Naive thymus-derived CD4-positive, alpha-beta T cell (primary cell): ENCODE measurements at regions of chr6 and their contacts with region 1.

Region 1: DNA sequence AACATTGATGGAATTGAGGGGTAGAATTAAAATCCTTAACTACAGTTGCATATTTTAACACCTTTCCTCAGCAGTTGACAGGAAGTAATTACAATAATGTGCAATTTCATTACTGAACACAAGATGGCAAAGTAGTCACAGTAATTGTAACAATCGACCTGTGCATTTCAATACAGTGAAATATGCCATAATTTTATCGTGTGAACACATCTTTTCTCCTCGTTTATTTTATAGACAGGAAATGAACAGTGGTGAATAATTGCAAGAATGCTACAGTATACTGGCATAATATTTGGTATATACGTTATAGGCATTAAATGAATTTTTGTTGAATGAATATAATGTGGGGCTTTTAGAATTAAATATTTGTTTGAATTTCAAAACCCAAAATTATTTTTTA is 25.0 kb downstream of the CYB5R4 start:
- DNase-seq: peak in 6 of 9 donors; percentile 17 to 54 (median 44)
- ATAC-seq: peak; percentile 77
- H3K4me3 ChIP-seq: no peak overlapping the region
- H3K4me3 Mint-ChIP-seq: no peak overlapping the region
- H3K27ac ChIP-seq: no peak overlapping the region
- H3K27ac Mint-ChIP-seq: no peak overlapping the region
- H3K4me1 ChIP-seq: no peaks in the 10 kb centered on the region
- H3K4me1 Mint-ChIP-seq: peaks cover 7 to 55% (median 28%) of the 10 kb centered on the region in 7 donors
- H3K27me3 ChIP-seq: no peaks in the 10 kb centered on the region
- H3K27me3 Mint-ChIP-seq: no peaks in the 10 kb centered on the region

Region 2: DNA sequence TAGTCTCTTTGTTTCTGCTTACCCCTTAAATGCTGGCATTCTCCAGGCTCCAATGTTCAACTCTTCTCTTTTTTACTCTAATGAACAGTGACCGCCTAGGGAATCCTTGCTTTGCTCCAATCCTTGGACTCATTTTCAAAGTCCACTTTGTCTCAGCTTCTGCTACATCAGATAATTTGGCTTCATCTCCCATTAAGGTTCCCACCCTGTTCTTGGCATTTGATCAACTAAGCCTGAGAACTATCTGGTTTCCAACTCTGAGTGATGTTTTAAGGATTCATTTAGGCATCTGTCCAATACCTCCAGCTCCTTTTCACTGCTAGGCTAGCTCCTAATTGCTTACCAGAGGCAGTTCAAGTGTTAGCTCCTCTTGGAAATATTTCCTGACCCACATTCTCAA is 518.6 kb before region 1 on chr6:
- CTCF ChIA-PET with region 1: no interaction called
- POLR2A ChIA-PET with region 1: no interaction called
- intact Hi-C with region 1: no loop called
- DNase-seq: no peak
- ATAC-seq: no peak
- H3K4me3 ChIP-seq: no peak overlapping the region
- H3K4me3 Mint-ChIP-seq: no peak overlapping the region
- H3K27ac ChIP-seq: no peak overlapping the region
- H3K27ac Mint-ChIP-seq: no peak overlapping the region
- H3K4me1 ChIP-seq: no peaks in the 10 kb centered on the region
- H3K4me1 Mint-ChIP-seq: no peaks in the 10 kb centered on the region
- H3K27me3 ChIP-seq: no peaks in the 10 kb centered on the region
- H3K27me3 Mint-ChIP-seq: peaks cover 0 to 6% (median 0%) of the 10 kb centered on the region in 5 donors

Region 3: DNA sequence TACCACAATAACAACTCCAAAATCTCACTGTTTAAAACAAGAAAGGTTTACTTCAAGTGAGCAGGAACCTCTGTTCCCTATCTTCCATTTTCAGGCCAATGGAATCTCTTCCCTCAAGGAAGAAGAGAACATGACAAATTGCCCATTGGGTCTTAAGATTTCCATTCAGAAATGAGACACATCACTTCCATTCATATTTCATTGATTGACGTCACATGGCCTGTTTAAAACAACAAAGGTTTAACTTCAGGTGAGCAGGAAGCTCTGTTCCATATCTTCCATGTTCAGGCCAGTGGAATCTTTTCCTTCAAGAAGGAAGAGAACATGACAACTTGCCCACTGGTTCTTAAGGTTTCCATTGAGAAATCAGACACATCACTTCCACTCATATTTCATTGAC is 42.2 kb before region 1 on chr6:
- CTCF ChIA-PET with region 1: no interaction called
- POLR2A ChIA-PET with region 1: no interaction called
- intact Hi-C with region 1: no loop called
- DNase-seq: no peak
- ATAC-seq: no peak
- H3K4me3 ChIP-seq: no peak overlapping the region
- H3K4me3 Mint-ChIP-seq: no peak overlapping the region
- H3K27ac ChIP-seq: no peak overlapping the region
- H3K27ac Mint-ChIP-seq: no peak overlapping the region
- H3K4me1 ChIP-seq: no peaks in the 10 kb centered on the region
- H3K4me1 Mint-ChIP-seq: no peaks in the 10 kb centered on the region
- H3K27me3 ChIP-seq: peaks cover 0 to 2% of the 10 kb centered on the region in 2 donors
- H3K27me3 Mint-ChIP-seq: peaks cover 5 to 34% (median 17%) of the 10 kb centered on the region in 5 donors

Region 4: GRCh38 chr6:83859410-83860358 is 24.8 kb before region 1 on chr6 and contains the start of gene CYB5R4:
- CTCF ChIA-PET with region 1: interaction called, 5 read pairs
- POLR2A ChIA-PET with region 1: no interaction called
- intact Hi-C with region 1: loop called in 1 of 2 experiments (anchors 2 kb)
- DNase-seq: peak; percentile 88 to 95 (median 94)
- ATAC-seq: peak; percentile 98
- H3K4me3 ChIP-seq: peak within 1 kb of the TSS; percentile 92
- H3K4me3 Mint-ChIP-seq: peak within 1 kb of the TSS; percentile 87 to 100 (median 98)
- H3K27ac ChIP-seq: peak within 1 kb of the TSS; percentile 82
- H3K27ac Mint-ChIP-seq: peak within 1 kb of the TSS; percentile 85 to 96 (median 91)
- H3K4me1 ChIP-seq: peaks cover 14 to 21% of the 10 kb centered on the region in 2 donors
- H3K4me1 Mint-ChIP-seq: peaks cover 23 to 47% (median 37%) of the 10 kb centered on the region in 7 donors
- H3K27me3 ChIP-seq: no peaks in the 10 kb centered on the region
- H3K27me3 Mint-ChIP-seq: peaks cover 8 to 18% (median 16%) of the 10 kb centered on the region in 5 donors
- total RNA-seq, gene CYB5R4: 17.8 to 38.6 (median 21.0) TPM

Region 5: GRCh38 chr6:84220809-84221409 is 336.4 kb after region 1 on chr6:
- CTCF ChIA-PET with region 1: interaction called, 10 read pairs
- POLR2A ChIA-PET with region 1: no interaction called
- intact Hi-C with region 1: loop called (anchors 1 kb)
- DNase-seq: peak in 1 of 9 donors; percentile 11
- ATAC-seq: no peak
- H3K4me3 ChIP-seq: no peak overlapping the region
- H3K4me3 Mint-ChIP-seq: no peak overlapping the region
- H3K27ac ChIP-seq: no peak overlapping the region
- H3K27ac Mint-ChIP-seq: no peak overlapping the region
- H3K4me1 ChIP-seq: no peaks in the 10 kb centered on the region
- H3K4me1 Mint-ChIP-seq: peaks cover 4 to 12% (median 4%) of the 10 kb centered on the region in 7 donors
- H3K27me3 ChIP-seq: no peaks in the 10 kb centered on the region
- H3K27me3 Mint-ChIP-seq: no peaks in the 10 kb centered on the region

Region 6: DNA sequence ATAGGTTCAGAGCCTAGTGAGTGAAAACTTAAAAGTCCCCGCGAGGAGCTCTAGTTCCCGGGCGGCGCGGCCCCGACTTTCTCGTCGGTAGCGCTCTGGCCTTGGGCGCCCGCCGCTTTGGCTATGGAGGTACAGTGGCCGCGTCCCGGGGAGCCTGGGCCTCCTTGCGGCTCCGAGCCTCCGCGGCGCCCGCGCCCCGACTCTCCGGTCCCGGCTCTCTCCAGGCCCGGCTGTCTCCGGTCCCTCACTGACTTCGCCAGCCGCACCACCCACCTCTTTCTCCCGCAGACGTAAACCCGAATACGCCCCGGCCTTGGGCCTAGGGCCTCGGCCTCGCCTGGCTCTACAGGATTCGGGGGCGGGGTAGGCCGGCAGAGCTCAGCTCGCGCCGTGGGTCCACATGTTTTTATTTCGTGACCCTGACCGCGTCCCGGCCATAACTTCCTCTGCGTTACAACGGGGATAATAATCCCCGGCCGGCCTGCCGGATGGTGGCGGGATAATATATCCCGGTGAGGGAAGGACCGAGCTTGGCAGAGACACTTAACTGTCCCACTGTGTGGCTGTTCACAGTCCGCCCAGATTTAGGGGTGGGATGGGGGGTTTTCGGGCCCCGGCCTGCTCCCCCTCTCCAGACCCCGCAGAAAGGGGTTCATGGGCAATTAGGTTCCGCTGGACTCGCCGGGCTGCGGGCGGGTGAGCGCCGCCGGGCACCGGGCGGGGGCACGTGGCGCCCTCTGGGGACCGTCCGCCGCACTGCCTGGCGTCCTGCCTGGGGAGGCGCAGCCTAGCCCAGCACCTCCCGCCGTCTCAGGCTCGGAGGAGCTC is 889.8 kb after region 1 on chr6:
- CTCF ChIA-PET with region 1: no interaction called
- POLR2A ChIA-PET with region 1: no interaction called
- intact Hi-C with region 1: loop called in 1 of 2 experiments (anchors 10 kb)
- DNase-seq: peak in 1 of 9 donors; percentile 38
- ATAC-seq: peak; percentile 27
- H3K4me3 ChIP-seq: no peak overlapping the region
- H3K4me3 Mint-ChIP-seq: peak overlapping the region in 1 of 10 donors; percentile 6
- H3K27ac ChIP-seq: no peak overlapping the region
- H3K27ac Mint-ChIP-seq: peak overlapping the region in 1 of 9 donors; percentile 13
- H3K4me1 ChIP-seq: no peaks in the 10 kb centered on the region
- H3K4me1 Mint-ChIP-seq: peaks cover 0 to 10% (median 1%) of the 10 kb centered on the region in 7 donors
- H3K27me3 ChIP-seq: peaks cover 0 to 8% of the 10 kb centered on the region in 2 donors
- H3K27me3 Mint-ChIP-seq: peaks cover 54 to 83% (median 76%) of the 10 kb centered on the region in 5 donors